WTC11 (cell line): ENCODE measurements at regions of chr20 and their contacts with region 1.

Region 1: DNA sequence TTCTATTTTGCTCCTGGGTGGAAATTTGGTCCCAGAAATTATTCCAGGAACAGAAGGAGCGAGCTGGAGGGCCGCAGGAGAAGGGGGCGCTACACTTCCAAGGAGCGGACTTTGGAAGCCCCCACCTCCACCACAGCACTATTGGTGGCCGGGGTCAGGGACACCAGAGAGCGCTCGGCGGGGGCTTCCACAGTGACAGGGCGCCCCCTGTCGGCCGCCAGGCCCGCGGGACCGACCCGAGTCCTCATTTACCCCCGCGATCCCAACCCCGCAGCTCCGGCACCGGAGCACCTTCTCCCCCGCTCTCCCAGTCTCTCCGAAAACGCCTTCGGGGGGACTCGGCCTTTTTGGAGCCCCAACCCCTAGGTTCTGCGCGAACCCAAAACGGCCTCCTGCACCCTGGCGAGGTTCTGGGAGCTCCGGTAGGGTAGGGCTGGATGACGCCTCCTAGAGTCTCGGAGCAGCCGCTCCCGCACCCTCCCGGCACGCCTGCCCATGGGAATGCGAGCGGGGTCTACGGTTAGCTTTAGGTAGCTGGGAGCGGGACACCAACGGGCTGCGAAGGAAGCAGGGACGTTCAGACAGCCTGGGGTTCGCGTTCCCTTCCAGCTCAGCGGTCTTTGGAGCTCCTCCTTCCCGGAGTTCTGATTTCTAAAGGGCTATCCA is 2.4 kb upstream of the FOXA2 start:
- DNase-seq: peak; percentile 83
- ATAC-seq: peak; percentile 44
- H3K4me3 Mint-ChIP-seq: peak overlapping the region; percentile 79
- H3K27ac Mint-ChIP-seq: no peak overlapping the region
- H3K4me1 Mint-ChIP-seq: peaks cover 58% of the 10 kb centered on the region
- H3K27me3 Mint-ChIP-seq: peaks cover 91% of the 10 kb centered on the region
- CTCF ChIP-seq: peak; percentile 91

Region 2: GRCh38 chr20:22333885-22334545 is 252.8 kb before region 1 on chr20:
- CTCF ChIA-PET with region 1: interaction called, 50 read pairs
- POLR2A ChIA-PET with region 1: no interaction called
- DNase-seq: peak; percentile 75
- ATAC-seq: peak; percentile 94
- H3K4me3 Mint-ChIP-seq: no peak overlapping the region
- H3K27ac Mint-ChIP-seq: no peak overlapping the region
- H3K4me1 Mint-ChIP-seq: 0 out of 2 replicates have a peak, but pooled peaks cover under 1% of the 10 kb centered on the region
- H3K27me3 Mint-ChIP-seq: peaks cover 21% of the 10 kb centered on the region
- CTCF ChIP-seq: peak; percentile 83

Region 3: GRCh38 chr20:22453239-22454080 is 133.3 kb before region 1 on chr20:
- CTCF ChIA-PET with region 1: interaction called, 19 read pairs
- POLR2A ChIA-PET with region 1: no interaction called
- DNase-seq: no peak
- ATAC-seq: no peak
- H3K4me3 Mint-ChIP-seq: no peak overlapping the region
- H3K27ac Mint-ChIP-seq: no peak overlapping the region
- H3K4me1 Mint-ChIP-seq: peaks cover 16% of the 10 kb centered on the region
- H3K27me3 Mint-ChIP-seq: peaks cover 89% of the 10 kb centered on the region
- CTCF ChIP-seq: peak; percentile 51

Region 4: GRCh38 chr20:22529150-22530019 is 57.4 kb before region 1 on chr20:
- CTCF ChIA-PET with region 1: interaction called, 10 read pairs
- POLR2A ChIA-PET with region 1: no interaction called
- DNase-seq: no peak
- ATAC-seq: peak; percentile 41
- H3K4me3 Mint-ChIP-seq: no peak overlapping the region
- H3K27ac Mint-ChIP-seq: no peak overlapping the region
- H3K4me1 Mint-ChIP-seq: peaks cover 43% of the 10 kb centered on the region
- H3K27me3 Mint-ChIP-seq: peaks cover 17% of the 10 kb centered on the region
- CTCF ChIP-seq: no peak

Region 5: GRCh38 chr20:22597303-22597702 is 10.5 kb after region 1 on chr20:
- CTCF ChIA-PET with region 1: interaction called, 40 read pairs
- POLR2A ChIA-PET with region 1: no interaction called
- DNase-seq: no peak
- ATAC-seq: no peak
- H3K4me3 Mint-ChIP-seq: no peak overlapping the region
- H3K27ac Mint-ChIP-seq: no peak overlapping the region
- H3K4me1 Mint-ChIP-seq: peaks cover 6% of the 10 kb centered on the region
- H3K27me3 Mint-ChIP-seq: peaks cover 31% of the 10 kb centered on the region
- CTCF ChIP-seq: no peak

Region 6: DNA sequence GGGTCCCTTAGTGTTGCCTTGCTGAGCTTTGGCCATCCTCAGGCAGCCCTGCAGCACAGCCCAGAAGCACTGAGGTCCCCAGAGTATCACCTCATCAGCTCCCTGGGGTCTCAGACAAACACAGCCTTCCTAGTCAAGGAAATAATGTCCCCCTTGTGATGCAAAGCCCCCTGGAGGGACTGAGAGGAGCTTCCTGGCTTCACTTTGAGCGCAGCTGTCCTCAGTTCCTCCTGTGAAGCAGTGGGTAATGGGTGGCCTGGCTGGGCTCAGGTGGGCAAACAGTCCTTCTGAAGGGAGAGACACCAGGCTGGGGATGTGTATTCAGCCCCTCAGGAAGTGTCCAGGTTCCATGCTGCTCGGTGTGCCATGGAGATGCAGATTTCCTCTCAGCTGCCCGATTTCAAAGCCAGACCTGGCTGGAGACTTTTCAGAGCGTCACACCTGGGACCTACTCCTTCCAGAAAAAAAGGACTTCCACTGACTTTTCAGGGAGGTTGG is 76.8 kb after region 1 on chr20:
- CTCF ChIA-PET with region 1: interaction called, 24 read pairs
- POLR2A ChIA-PET with region 1: no interaction called
- DNase-seq: peak; percentile 44
- ATAC-seq: peak; percentile 90
- H3K4me3 Mint-ChIP-seq: no peak overlapping the region
- H3K27ac Mint-ChIP-seq: peak overlapping the region; percentile 68
- H3K4me1 Mint-ChIP-seq: peaks cover 42% of the 10 kb centered on the region
- H3K27me3 Mint-ChIP-seq: peaks cover 9% of the 10 kb centered on the region; the same call in 1 of the 2 replicates
- CTCF ChIP-seq: no peak

Region 7: DNA sequence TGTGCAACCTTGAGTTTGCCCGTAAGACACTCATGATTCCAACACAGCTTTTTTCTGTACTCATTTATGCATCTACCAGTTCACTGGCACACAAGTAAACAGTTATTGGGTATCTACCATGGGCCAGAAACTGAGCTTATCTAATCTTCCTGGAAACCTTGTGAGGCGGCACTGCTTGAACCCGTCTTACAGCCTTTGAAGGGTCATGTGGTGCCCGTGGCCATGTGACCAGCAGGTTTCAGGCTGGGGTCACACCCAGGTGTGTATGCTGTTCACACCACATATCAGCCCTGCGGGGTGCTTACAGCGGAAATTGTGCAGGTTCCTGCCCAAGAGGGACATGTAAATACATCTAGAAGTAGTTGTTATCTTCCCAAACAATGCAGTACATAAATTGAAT is 456.6 kb after region 1 on chr20:
- CTCF ChIA-PET with region 1: no interaction called
- POLR2A ChIA-PET with region 1: no interaction called
- DNase-seq: no peak
- ATAC-seq: no peak
- H3K4me3 Mint-ChIP-seq: no peak overlapping the region
- H3K27ac Mint-ChIP-seq: no peak overlapping the region
- H3K4me1 Mint-ChIP-seq: peaks cover 56% of the 10 kb centered on the region
- H3K27me3 Mint-ChIP-seq: peaks cover 82% of the 10 kb centered on the region
- CTCF ChIP-seq: no peak